ENCODE measurements at regions of chr7 and their contacts with region 1.

Region 1: GRCh38 chr7:151368136-151368571 is 26.5 kb downstream of the NUB1 start:
- DNase-seq: peak; percentile 62 to 81 (median 72)
- H3K4me3 ChIP-seq: no peak overlapping the region
- H3K4me3 Mint-ChIP-seq: no peak overlapping the region
- H3K27ac ChIP-seq: no peak overlapping the region
- H3K27ac Mint-ChIP-seq: peak overlapping the region in 7 of 8 donors; percentile 56 to 83 (median 78)
- H3K4me1 ChIP-seq: peaks cover 9% of the 10 kb centered on the region
- H3K4me1 Mint-ChIP-seq: peaks cover 10 to 21% (median 14%) of the 10 kb centered on the region in 3 donors
- H3K27me3 ChIP-seq: no peaks in the 10 kb centered on the region
- H3K27me3 Mint-ChIP-seq: no peaks in the 10 kb centered on the region

Region 2: DNA sequence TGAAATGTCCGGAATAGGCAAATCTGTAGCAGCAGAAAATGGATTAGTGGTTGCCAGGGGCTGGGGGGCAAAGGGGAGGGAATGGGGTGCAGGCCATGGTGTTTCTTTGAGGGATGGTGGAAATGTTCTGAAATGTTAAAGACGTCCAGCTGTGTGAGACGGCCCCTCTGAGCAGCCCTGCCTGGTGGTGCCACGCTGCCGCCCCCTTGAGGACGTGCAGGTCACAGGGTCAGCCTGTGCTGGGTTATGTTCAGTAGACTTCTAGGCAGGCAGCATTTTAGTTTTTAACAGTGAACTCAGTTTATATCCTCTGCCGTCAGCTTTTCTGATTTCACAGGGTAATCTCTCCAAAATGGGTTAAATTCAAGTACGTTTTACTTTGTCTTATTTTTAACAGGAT is 17.1 kb before region 1 on chr7:
- CTCF ChIA-PET with region 1: interaction called, 10 read pairs
- POLR2A ChIA-PET with region 1: no interaction called
- DNase-seq: peak in 2 of 5 donors; percentile 13 to 20
- H3K4me3 ChIP-seq: no peak overlapping the region
- H3K4me3 Mint-ChIP-seq: peak overlapping the region in 6 of 7 donors; percentile 45 to 87 (median 74)
- H3K27ac ChIP-seq: peak overlapping the region; percentile 43
- H3K27ac Mint-ChIP-seq: peak overlapping the region; percentile 95 to 99 (median 96)
- H3K4me1 ChIP-seq: peaks cover 39% of the 10 kb centered on the region
- H3K4me1 Mint-ChIP-seq: peaks cover 38 to 73% (median 48%) of the 10 kb centered on the region in 3 donors
- H3K27me3 ChIP-seq: no peaks in the 10 kb centered on the region
- H3K27me3 Mint-ChIP-seq: peaks cover 0 to 2% of the 10 kb centered on the region in 2 donors

Region 3: DNA sequence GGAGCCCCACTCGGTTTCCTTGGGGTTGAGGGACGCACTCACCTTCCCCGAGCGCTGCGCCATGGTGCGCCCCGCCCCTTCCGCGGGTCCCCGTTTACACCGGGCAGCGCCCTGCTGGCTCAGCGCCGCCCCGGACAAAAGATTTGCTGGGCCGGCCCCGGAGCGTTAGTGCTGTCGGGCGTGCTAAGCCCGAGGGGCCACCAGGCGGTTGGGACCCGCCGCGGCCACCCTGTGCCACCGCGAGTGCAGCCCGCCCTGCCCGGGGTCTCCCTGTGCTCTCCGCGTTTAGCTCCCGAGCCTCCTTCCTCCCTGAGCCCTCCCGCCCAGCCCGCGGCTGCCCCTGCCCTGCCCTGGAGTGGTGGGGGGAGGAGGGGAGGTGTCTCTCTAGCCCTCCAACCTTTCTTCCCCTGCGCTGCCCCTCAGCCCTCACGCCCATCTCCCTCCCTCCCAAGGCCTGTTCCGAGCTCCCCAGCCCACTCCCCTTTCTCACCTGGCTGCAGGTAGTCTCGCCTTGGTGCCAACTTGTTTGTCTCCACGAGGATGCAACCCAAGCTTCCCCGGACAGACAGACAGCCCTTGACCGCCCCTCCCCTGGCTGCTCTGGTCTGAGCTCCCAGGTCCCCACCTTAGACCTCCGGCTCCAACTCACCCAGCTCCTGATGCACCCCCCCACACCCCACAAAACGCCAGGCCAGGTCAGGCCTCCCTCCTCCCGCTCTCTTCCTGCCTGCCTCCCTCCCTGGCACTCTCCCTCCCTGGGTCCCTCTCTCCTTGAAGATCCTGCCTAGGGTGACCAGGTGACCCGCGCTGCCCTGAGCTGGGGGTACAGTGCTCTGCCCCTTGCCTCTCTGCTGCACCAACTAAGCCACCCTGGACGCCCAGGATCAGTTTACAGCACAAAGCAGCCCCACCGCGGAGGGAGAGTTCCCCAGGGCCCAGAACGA is 72.0 kb after region 1 on chr7 and contains the start of gene CRYGN:
- CTCF ChIA-PET with region 1: interaction called, 13 read pairs
- POLR2A ChIA-PET with region 1: no interaction called
- DNase-seq: peak in 1 of 5 donors; percentile 46
- H3K4me3 ChIP-seq: no peak within 1 kb of the TSS
- H3K4me3 Mint-ChIP-seq: peak within 1 kb of the TSS in 6 of 7 donors; percentile 29 to 70 (median 57)
- H3K27ac ChIP-seq: no peak within 1 kb of the TSS
- H3K27ac Mint-ChIP-seq: peak within 1 kb of the TSS; percentile 5 to 95 (median 76)
- H3K4me1 ChIP-seq: peaks cover 28% of the 10 kb centered on the region
- H3K4me1 Mint-ChIP-seq: peaks cover 6 to 37% (median 26%) of the 10 kb centered on the region in 3 donors
- H3K27me3 ChIP-seq: no peaks in the 10 kb centered on the region
- H3K27me3 Mint-ChIP-seq: peaks cover 0 to 2% of the 10 kb centered on the region in 2 donors
- total RNA-seq, gene CRYGN: not detected

Measured in CD8-positive, alpha-beta memory T cell (primary cell).